HepG2 (cell line): ENCODE measurements at regions of chr18 and their contacts with region 1.

Region 1: GRCh38 chr18:902229-902628 is 2.4 kb upstream of the ADCYAP1 start:
- DNase-seq: no peak
- ATAC-seq: no peak
- H3K4me3 ChIP-seq: no peak overlapping the region
- H3K27ac ChIP-seq: no peak overlapping the region
- H3K4me1 ChIP-seq: no peaks in the 10 kb centered on the region
- H3K27me3 ChIP-seq: peaks cover 0 to 29% of the 10 kb centered on the region in 2 experiments; a peak in 4 of 5 replicates
- CTCF ChIP-seq: peak; percentile 28; the same call in 1 of the 2 replicates
- EP300 ChIP-seq: no peak
- POLR2A ChIP-seq: no peak
- RAD21 ChIP-seq: no peak

Region 2: DNA sequence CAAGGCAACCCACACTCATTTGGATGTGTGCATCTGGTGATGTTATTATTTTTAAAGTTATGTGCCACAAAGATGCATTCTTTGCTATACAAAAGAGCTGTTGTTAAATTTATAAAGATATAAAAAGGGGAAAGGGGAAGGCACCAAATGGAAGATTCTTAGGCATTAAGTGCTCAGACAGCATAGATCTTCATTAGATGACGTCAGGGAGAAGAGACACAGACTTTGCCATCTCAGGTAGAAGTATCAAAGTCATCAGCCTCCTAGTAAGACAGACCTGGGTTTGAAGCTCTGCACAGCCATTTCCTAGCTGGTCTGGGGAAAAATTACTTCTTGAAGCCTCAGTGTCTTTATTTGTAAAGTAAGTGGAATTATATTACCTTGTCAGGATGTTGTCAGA is 306.7 kb before region 1 on chr18:
- CTCF ChIA-PET with region 1: no interaction called
- POLR2A ChIA-PET with region 1: no interaction called
- in situ Hi-C with region 1: no loop called
- intact Hi-C with region 1: no loop called
- DNase-seq: no peak
- ATAC-seq: no peak
- H3K4me3 ChIP-seq: peak overlapping the region in 1 of 3 experiments; percentile 64; a peak in 1 of 6 replicates
- H3K27ac ChIP-seq: no peak overlapping the region
- H3K4me1 ChIP-seq: peaks cover 16% of the 10 kb centered on the region
- H3K27me3 ChIP-seq: 0 out of 5 replicates have a peak, but pooled peaks cover 0 to 3% of the 10 kb centered on the region in 2 experiments
- CTCF ChIP-seq: no peak
- EP300 ChIP-seq: no peak
- POLR2A ChIP-seq: no peak
- RAD21 ChIP-seq: no peak

Region 3: DNA sequence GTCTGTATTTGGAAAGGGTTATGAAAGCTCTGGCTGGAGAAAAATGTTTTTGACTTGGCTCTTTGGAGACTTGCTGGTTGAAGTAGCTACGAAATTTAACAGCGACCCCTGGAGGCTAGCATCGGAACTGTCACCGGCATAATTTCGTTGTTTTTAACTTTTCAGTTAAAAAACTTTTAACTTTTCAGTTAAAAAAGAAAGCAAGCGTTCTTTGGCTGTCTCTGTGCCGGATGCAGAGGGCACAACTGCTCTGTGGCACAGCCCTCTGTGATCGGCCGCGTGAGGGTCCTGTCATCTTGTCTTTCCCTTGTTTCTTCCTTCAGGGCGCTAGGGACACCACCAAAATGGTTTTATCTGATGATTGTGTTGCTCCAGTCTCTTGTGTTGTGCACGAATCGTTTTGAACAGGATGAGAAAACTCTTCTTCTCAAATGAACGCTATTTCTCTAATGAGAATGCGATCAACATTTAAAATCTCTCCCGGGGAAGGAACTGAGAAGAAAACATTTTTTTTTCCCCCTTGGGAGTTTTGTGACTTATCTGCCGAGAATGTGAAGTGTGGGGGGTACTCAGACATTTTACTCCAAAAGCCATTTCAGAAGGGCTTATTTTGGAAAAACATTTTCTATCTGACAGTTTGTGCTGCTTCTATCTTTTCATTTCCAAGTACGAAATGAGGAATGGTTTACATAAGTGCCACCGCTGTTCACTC is 59.6 kb after region 1 on chr18:
- CTCF ChIA-PET with region 1: interaction called, 9 read pairs
- POLR2A ChIA-PET with region 1: no interaction called
- in situ Hi-C with region 1: no loop called
- intact Hi-C with region 1: loop called (anchors 1 kb)
- DNase-seq: peak; percentile 13
- ATAC-seq: no peak
- H3K4me3 ChIP-seq: no peak overlapping the region
- H3K27ac ChIP-seq: no peak overlapping the region
- H3K4me1 ChIP-seq: no peaks in the 10 kb centered on the region
- H3K27me3 ChIP-seq: peaks cover 0 to 3% of the 10 kb centered on the region in 2 experiments; a peak in 1 of 5 replicates
- CTCF ChIP-seq: peak; percentile 67
- EP300 ChIP-seq: no peak
- POLR2A ChIP-seq: no peak
- RAD21 ChIP-seq: no peak